ENCODE measurements at regions of chr11 and their contacts with region 1.

Region 1: DNA sequence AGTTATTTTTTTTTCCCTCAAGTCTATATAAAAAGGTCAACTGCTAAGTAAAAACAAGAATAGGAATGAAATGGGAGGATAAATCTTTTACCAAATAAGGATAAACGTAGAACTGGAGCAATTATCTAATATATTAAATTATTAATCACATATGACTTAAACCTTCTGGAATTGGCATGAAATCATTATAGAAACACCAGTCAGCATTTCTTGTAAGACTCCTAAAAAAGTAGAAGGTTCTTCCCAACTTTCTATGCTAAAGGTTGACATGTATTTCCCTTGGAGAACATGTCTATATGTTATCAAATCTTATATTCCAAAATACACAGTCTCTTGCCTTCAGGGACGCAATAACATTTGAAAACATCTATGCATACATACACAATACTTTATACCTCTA is 143.2 kb downstream of the SBF2 start:
- DNase-seq: no peak
- H3K4me3 ChIP-seq: no peak overlapping the region
- H3K27ac ChIP-seq: no peak overlapping the region
- H3K4me1 ChIP-seq: no peaks in the 10 kb centered on the region
- CTCF ChIP-seq: no peak

Region 2: DNA sequence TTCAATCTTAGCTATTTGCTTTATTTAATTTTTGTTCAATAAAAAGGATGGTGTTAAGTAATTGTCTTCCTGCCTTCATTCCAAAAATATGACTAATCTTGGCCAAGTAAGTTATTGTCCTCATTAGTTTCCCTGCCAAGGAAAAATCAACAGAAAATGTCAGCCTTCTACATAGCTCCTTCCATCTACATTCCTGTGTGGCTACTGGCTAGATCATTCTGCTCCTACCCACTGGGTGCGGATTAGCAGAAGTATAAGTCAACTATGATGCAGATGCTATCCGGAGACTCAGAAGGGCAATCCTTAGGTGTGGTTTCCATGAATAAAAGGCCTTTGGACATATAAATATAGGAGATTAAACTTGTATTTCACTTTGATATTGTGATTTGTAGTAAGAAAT is 11.1 kb before region 1 on chr11:
- CTCF ChIA-PET with region 1: no interaction called
- POLR2A ChIA-PET with region 1: no interaction called
- intact Hi-C with region 1: no loop called
- DNase-seq: no peak
- H3K4me3 ChIP-seq: no peak overlapping the region
- H3K27ac ChIP-seq: no peak overlapping the region
- H3K4me1 ChIP-seq: no peaks in the 10 kb centered on the region
- CTCF ChIP-seq: no peak

Region 3: GRCh38 chr11:10192036-10192435 is 41.2 kb after region 1 on chr11:
- CTCF ChIA-PET with region 1: no interaction called
- POLR2A ChIA-PET with region 1: no interaction called
- intact Hi-C with region 1: loop called (anchors 1 kb)
- DNase-seq: no peak
- H3K4me3 ChIP-seq: no peak overlapping the region
- H3K27ac ChIP-seq: no peak overlapping the region
- H3K4me1 ChIP-seq: no peaks in the 10 kb centered on the region
- CTCF ChIP-seq: no peak